Dendritic cell treated with granulocyte-macrophage colony-stimulating factor and Interleukin-4, amounts not matched to agents 40 ng/mL and 50 ng/mL, for 4 days (primary cell): ENCODE measurements at regions of chr21 and their contacts with region 1.

Region 1: DNA sequence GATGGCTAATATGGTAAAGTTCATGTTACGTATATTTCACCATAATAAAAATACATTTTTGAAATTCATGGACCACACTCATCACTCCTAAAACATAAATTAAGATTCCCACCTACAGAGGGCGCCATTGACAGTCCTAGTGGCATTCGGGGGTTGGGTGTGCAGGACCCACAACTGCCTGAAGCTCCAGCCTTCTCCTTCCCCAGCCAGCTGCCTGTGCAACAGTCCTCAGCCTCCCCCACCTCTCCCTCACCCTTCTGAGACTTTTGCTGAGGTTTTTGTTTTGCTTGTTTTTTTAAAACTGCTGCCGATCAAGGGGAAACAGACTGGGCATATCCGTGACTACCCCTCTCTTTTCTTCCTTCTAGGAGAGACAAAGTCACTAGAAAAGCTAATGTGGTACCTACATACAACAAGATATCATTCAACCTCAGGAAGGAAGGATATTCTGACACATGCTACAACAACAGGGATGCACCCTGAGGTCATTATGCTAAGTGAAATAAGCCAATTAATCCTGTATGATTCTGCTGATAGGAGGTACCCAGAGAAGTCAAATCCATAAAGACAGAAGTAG is 9.2 kb upstream of the EVA1C start:
- H3K4me3 Mint-ChIP-seq: no peak overlapping the region
- H3K27ac Mint-ChIP-seq: no peak overlapping the region
- H3K4me1 Mint-ChIP-seq: no peaks in the 10 kb centered on the region
- H3K27me3 Mint-ChIP-seq: peaks cover 23% of the 10 kb centered on the region

Region 2: DNA sequence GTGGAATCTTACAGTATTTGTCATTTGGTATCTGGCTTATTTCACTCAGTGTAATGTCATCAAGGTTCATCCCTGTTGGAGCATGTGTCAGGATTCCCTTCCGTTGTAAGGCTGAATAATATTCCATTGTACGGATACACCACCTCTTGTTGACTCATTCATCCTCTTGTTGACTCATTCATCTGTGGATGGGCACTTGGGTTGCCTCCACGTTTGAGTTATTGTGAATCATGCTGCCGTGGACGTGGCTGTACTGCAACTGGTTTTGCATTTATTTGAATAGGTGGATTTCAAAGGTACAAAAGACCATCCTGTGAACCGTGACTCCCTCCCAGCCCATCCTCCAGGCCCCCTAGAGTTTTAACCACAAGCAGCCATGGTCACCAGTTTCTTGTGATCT is 193.9 kb after region 1 on chr21:
- intact Hi-C with region 1: loop called (anchors 1 kb)
- H3K4me3 Mint-ChIP-seq: no peak overlapping the region
- H3K27ac Mint-ChIP-seq: no peak overlapping the region
- H3K4me1 Mint-ChIP-seq: no peaks in the 10 kb centered on the region
- H3K27me3 Mint-ChIP-seq: no peaks in the 10 kb centered on the region

Region 3: DNA sequence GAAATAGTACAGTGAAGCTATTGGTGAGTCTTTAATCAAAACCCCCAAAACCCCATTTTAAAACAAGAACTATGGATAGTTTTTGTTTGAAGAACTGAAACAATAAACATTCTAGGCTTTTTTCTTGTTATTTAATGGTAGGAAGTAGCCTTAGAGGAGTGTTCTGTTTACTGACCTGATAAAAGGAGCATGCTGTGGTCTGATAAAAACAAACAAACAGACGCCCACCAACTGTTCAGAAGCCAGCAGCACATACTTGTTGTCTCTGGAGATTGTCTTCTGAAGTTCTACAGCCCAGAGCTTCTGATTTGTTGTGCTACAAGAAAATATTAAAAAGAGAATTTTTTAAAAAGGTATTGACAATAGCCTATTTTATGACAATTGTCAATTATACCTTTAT is 263.0 kb after region 1 on chr21:
- intact Hi-C with region 1: no loop called
- H3K4me3 Mint-ChIP-seq: no peak overlapping the region
- H3K27ac Mint-ChIP-seq: no peak overlapping the region
- H3K4me1 Mint-ChIP-seq: no peaks in the 10 kb centered on the region
- H3K27me3 Mint-ChIP-seq: no peaks in the 10 kb centered on the region